Gastrocnemius medialis (tissue), 4 donors: ENCODE measurements at regions of chr11 and their contacts with region 1.

Region 1: DNA sequence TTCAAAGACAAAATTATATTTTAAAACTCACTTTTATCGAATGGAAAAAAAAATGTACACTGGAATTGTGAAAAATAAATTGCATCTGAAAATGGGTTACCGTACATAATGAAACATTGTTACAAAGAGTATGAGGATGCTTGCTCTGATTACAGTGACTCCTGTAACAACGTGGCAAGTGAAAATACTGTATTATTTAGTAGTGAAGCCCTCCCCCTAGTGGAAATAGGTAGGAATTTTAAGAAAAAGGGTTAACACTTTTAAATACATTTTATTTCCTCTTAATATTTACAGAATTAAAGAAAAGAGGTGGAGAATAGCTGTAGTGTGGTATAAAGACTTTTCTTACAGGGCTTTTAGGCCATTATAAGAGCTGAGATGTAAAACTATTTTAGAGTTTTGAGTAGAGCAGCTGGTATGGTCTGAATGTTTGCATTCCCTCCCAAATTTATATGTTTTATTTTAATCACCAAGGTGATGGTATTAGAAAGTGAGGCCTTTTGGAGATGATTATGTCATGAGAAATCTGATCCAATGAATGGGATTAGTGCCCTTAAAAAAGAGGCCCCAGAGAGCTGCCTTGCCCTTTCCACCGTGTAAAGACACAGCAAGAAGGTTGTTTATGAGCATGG is 25.2 kb downstream of the FAM76B start:
- DNase-seq: no peak
- ATAC-seq: peak in 1 of 2 donors; percentile 58
- H3K4me3 ChIP-seq: no peak overlapping the region
- H3K27ac ChIP-seq: no peak overlapping the region
- H3K4me1 ChIP-seq: no peaks in the 10 kb centered on the region
- H3K27me3 ChIP-seq: no peaks in the 10 kb centered on the region
- CTCF ChIP-seq: peak; percentile 42 to 72 (median 63)
- POLR2A ChIP-seq: no peak

Region 2: GRCh38 chr11:94997437-94997836 is 766.9 kb before region 1 on chr11:
- in situ Hi-C with region 1: loop called in 1 of 4 experiments (anchors 25 kb)
- intact Hi-C with region 1: no loop called
- DNase-seq: no peak
- ATAC-seq: no peak
- H3K4me3 ChIP-seq: no peak overlapping the region
- H3K27ac ChIP-seq: no peak overlapping the region
- H3K4me1 ChIP-seq: no peaks in the 10 kb centered on the region
- H3K27me3 ChIP-seq: no peaks in the 10 kb centered on the region
- CTCF ChIP-seq: no peak
- POLR2A ChIP-seq: no peak

Region 3: GRCh38 chr11:95076416-95076815 is 688.0 kb before region 1 on chr11:
- in situ Hi-C with region 1: loop called in 1 of 4 experiments (anchors 10 kb)
- intact Hi-C with region 1: no loop called
- DNase-seq: no peak
- ATAC-seq: no peak
- H3K4me3 ChIP-seq: no peak overlapping the region
- H3K27ac ChIP-seq: no peak overlapping the region
- H3K4me1 ChIP-seq: peaks cover 18 to 19% of the 10 kb centered on the region in 2 donors
- H3K27me3 ChIP-seq: no peaks in the 10 kb centered on the region
- CTCF ChIP-seq: no peak
- POLR2A ChIP-seq: no peak

Region 4: DNA sequence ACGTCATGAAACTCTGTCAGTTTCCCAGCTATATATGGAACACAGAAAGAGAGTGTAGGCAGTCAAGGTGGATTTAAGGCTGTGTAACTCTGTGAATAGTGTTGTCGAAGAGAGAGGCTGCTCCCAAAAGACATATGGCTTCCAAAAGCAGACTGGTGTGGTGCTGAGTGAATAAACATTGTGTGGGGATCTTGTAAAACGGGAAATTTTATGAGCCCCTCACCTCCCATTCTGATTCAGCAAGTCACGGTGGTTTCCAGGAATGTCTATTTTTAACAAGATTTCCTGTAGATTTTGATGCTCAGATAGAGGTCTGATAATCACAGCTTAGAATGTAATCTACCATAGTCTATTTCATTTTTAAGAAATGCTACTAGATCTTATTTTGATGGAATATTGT is 601.3 kb before region 1 on chr11:
- in situ Hi-C with region 1: loop called (anchors 5 to 10 kb)
- intact Hi-C with region 1: no loop called
- DNase-seq: no peak
- ATAC-seq: no peak
- H3K4me3 ChIP-seq: no peak overlapping the region
- H3K27ac ChIP-seq: no peak overlapping the region
- H3K4me1 ChIP-seq: peaks cover 3 to 6% of the 10 kb centered on the region in 2 donors
- H3K27me3 ChIP-seq: no peaks in the 10 kb centered on the region
- CTCF ChIP-seq: no peak
- POLR2A ChIP-seq: no peak